RWPE1 (cell line): ENCODE measurements at regions of chr1 and their contacts with region 1.

Region 1: GRCh38 chr1:40449684-40450494 is at the start of gene ZFP69B:
- DNase-seq: peak; percentile 92
- H3K27ac ChIP-seq: peak within 1 kb of the TSS; percentile 89
- CTCF ChIP-seq: no peak

Region 2: GRCh38 chr1:40438391-40439015 is 11.4 kb before region 1 on chr1:
- CTCF ChIA-PET with region 1: interaction called, 3 read pairs
- POLR2A ChIA-PET with region 1: interaction called, 13 read pairs
- DNase-seq: peak; percentile 44
- H3K27ac ChIP-seq: no peak overlapping the region
- CTCF ChIP-seq: peak; percentile 61